ENCODE measurements at regions of chr3 and their contacts with region 1.

Region 1: GRCh38 chr3:65342084-65342683 is 654.4 kb upstream of the ADAMTS9 start:
- DNase-seq: peak; percentile 13
- H3K4me3 ChIP-seq: no peak overlapping the region
- H3K27ac ChIP-seq: no peak overlapping the region
- H3K4me1 ChIP-seq: no peaks in the 10 kb centered on the region
- H3K27me3 ChIP-seq: no peaks in the 10 kb centered on the region
- CTCF ChIP-seq: peak; percentile 76 to 81

Region 2: GRCh38 chr3:65627102-65627501 is 284.9 kb after region 1 on chr3:
- CTCF ChIA-PET with region 1: no interaction called
- dilution Hi-C with region 1: no loop called
- in situ Hi-C with region 1: no loop called
- intact Hi-C with region 1: no loop called
- DNase-seq: peak; percentile 16
- H3K4me3 ChIP-seq: no peak overlapping the region
- H3K27ac ChIP-seq: no peak overlapping the region
- H3K4me1 ChIP-seq: no peaks in the 10 kb centered on the region
- H3K27me3 ChIP-seq: no peaks in the 10 kb centered on the region
- CTCF ChIP-seq: no peak

Region 3: DNA sequence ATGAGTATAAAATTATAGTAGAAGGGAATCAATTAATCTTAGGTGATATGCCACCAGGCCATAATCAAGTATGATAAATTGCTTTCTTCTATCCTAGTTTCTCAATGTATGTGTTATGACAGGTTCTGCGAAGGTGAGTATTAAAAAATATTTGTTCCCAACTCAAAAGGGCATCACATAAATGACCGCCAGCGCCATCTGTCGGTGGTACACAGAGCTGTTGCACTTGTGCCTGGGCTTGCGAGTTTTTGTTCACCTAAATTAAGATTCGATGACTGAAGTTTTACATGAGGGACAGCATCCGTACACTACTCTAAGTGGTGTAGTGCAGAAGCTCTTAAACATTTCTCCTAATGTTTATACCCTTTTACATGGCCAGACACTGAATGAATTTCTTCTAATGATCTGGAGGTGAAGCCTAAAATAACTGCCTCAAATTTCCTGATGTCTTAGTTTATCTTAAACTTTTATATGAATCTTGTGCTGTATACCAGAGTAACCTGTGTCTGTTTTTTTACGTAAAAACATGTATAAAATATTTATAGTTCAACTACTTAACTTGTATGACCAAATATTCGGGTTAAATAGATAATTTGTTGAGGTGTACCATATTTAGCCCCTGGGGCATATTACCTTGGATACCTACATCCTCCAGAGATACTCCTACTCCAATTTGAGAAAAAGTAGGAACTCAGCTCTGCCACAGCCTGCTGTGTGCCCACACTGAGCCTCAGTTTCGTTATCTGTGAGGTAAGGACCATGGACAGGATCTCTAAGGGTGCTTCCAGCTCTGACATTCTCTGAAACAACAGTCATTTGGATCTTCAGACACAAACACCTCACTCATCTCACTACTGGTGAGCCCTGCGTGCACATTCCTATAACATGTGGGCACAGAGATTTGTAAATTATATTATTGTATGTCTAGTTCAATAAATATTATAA is 331.0 kb after region 1 on chr3:
- CTCF ChIA-PET with region 1: no interaction called
- dilution Hi-C with region 1: no loop called
- in situ Hi-C with region 1: no loop called
- intact Hi-C with region 1: loop called (anchors 2 kb)
- DNase-seq: peak; percentile 30
- H3K4me3 ChIP-seq: no peak overlapping the region
- H3K27ac ChIP-seq: no peak overlapping the region
- H3K4me1 ChIP-seq: peaks cover 6% of the 10 kb centered on the region
- H3K27me3 ChIP-seq: no peaks in the 10 kb centered on the region
- CTCF ChIP-seq: peak; percentile 83 to 84

Region 4: GRCh38 chr3:65732051-65732935 is 390.1 kb after region 1 on chr3:
- CTCF ChIA-PET with region 1: no interaction called
- dilution Hi-C with region 1: no loop called
- in situ Hi-C with region 1: loop called in 1 of 2 experiments (anchors 10 kb)
- intact Hi-C with region 1: loop called (anchors 1 kb)
- DNase-seq: peak; percentile 52
- H3K4me3 ChIP-seq: no peak overlapping the region
- H3K27ac ChIP-seq: no peak overlapping the region
- H3K4me1 ChIP-seq: no peaks in the 10 kb centered on the region
- H3K27me3 ChIP-seq: no peaks in the 10 kb centered on the region
- CTCF ChIP-seq: peak; percentile 82 to 88

Region 5: DNA sequence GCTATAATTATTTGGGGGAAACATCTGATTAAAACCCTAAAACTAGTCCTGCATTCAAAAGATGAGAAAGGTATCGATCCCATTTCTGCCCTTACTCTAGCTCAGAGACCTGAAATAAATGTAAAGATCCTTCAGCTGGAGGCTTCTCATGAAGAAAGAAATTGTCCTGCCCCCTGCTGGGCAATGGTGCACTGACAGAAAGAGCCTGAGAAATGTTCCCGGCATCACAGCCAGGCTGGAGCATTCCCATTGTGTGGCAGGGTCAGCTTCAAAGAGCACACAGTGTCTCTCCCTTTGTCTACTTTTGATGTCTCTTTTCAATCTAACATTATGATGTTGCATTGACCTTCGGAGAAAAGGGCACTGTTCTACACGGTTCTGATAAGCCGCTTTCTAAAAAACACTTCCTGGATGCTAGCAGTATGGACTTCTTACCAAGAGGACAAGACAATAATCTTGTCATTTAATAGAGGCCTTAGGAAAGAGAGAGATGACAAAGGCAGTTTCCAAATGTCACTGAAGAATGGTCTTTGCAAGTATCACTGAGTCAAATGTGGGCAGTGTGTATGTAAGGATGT is 409.0 kb after region 1 on chr3:
- CTCF ChIA-PET with region 1: no interaction called
- dilution Hi-C with region 1: no loop called
- in situ Hi-C with region 1: no loop called
- intact Hi-C with region 1: loop called (anchors 1 kb)
- DNase-seq: peak; percentile 11
- H3K4me3 ChIP-seq: no peak overlapping the region
- H3K27ac ChIP-seq: no peak overlapping the region
- H3K4me1 ChIP-seq: no peaks in the 10 kb centered on the region
- H3K27me3 ChIP-seq: no peaks in the 10 kb centered on the region
- CTCF ChIP-seq: peak; percentile 73 to 76